ENCODE measurements at regions of chr15 and their contacts with region 1.

Region 1: DNA sequence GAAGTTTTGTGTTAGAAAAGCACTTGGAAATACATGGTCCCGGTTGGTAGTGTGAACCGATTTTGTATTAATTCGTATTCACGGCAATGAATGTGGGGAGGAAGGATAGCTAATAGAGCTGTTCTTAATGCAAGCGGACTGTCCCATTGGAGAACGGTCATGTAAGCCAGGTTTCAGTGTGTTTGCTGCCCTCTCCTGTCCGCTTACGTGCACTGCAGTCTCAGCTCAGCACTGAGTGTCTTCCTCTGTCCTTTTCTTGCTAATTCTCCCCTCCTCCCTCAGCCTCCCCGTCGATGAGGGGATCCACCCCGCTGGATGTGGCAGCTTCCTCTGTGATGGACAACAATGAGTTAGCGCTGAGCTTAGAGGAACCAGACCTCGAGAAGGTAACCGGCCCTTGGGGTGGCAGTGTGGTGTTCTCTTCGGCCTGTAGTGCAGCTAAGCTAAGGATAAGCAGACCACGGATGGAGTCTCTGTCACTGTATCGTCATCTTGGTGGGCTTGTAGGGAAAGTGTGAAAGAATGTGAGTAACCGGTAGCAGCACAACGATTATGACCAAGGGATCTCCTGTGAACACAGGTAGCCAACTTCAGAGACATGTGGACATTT is 267.5 kb upstream of the CHRM5 start:
- DNase-seq: peak; percentile 77
- ATAC-seq: peak; percentile 100
- H3K4me3 ChIP-seq: no peak overlapping the region
- H3K27ac ChIP-seq: no peak overlapping the region
- H3K4me1 ChIP-seq: no peaks in the 10 kb centered on the region
- H3K27me3 ChIP-seq: peaks cover 15% of the 10 kb centered on the region
- CTCF ChIP-seq: peak; percentile 92
- POLR2A ChIP-seq: no peak
- RAD21 ChIP-seq: peak; percentile 86

Region 2: DNA sequence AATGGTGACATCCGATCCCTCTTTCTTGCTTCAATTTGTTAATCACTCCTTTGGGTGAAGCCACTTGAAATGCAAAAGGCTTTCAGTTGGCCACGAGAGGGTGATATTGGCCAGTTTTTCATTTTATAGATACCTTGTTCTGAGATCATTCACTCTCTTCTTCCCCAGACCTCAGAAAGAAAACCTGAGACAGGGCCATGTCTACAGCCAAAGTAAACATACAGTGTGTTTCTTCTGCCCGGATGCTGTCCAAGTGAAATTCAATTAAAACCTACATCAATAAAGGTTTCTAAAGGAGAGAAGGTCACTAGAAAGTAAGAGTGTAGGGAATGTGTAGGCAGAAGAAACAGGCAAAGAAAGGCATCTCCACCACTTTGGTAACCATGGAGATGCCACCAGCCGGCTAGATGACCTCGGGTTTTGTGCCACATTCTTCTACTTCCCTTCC is 466.8 kb before region 1 on chr15:
- CTCF ChIA-PET with region 1: interaction called, 5 read pairs
- POLR2A ChIA-PET with region 1: no interaction called
- dilution Hi-C with region 1: no loop called
- in situ Hi-C with region 1: loop called (anchors 10 kb)
- intact Hi-C with region 1: loop called (anchors 1 kb)
- DNase-seq: peak; percentile 45
- ATAC-seq: peak; percentile 70
- H3K4me3 ChIP-seq: no peak overlapping the region
- H3K27ac ChIP-seq: no peak overlapping the region
- H3K4me1 ChIP-seq: no peaks in the 10 kb centered on the region
- H3K27me3 ChIP-seq: peaks cover 26% of the 10 kb centered on the region
- CTCF ChIP-seq: peak; percentile 54
- POLR2A ChIP-seq: no peak
- RAD21 ChIP-seq: peak; percentile 52

Region 3: GRCh38 chr15:33292717-33293307 is 408.0 kb before region 1 on chr15:
- CTCF ChIA-PET with region 1: interaction called, 29 read pairs
- POLR2A ChIA-PET with region 1: no interaction called
- dilution Hi-C with region 1: no loop called
- in situ Hi-C with region 1: no loop called
- intact Hi-C with region 1: loop called (anchors 1 kb)
- DNase-seq: peak; percentile 53
- ATAC-seq: peak; percentile 82
- H3K4me3 ChIP-seq: no peak overlapping the region
- H3K27ac ChIP-seq: no peak overlapping the region
- H3K4me1 ChIP-seq: no peaks in the 10 kb centered on the region
- H3K27me3 ChIP-seq: peaks cover 20% of the 10 kb centered on the region
- CTCF ChIP-seq: peak; percentile 62
- POLR2A ChIP-seq: no peak
- RAD21 ChIP-seq: peak; percentile 66

Region 4: GRCh38 chr15:33309602-33310276 is 391.1 kb before region 1 on chr15:
- CTCF ChIA-PET with region 1: interaction called, 3 read pairs
- POLR2A ChIA-PET with region 1: no interaction called
- dilution Hi-C with region 1: no loop called
- in situ Hi-C with region 1: loop called (anchors 10 kb)
- intact Hi-C with region 1: no loop called
- DNase-seq: no peak
- ATAC-seq: no peak
- H3K4me3 ChIP-seq: no peak overlapping the region
- H3K27ac ChIP-seq: no peak overlapping the region
- H3K4me1 ChIP-seq: no peaks in the 10 kb centered on the region
- H3K27me3 ChIP-seq: peaks cover 33% of the 10 kb centered on the region
- CTCF ChIP-seq: no peak
- POLR2A ChIP-seq: no peak
- RAD21 ChIP-seq: no peak

Region 5: DNA sequence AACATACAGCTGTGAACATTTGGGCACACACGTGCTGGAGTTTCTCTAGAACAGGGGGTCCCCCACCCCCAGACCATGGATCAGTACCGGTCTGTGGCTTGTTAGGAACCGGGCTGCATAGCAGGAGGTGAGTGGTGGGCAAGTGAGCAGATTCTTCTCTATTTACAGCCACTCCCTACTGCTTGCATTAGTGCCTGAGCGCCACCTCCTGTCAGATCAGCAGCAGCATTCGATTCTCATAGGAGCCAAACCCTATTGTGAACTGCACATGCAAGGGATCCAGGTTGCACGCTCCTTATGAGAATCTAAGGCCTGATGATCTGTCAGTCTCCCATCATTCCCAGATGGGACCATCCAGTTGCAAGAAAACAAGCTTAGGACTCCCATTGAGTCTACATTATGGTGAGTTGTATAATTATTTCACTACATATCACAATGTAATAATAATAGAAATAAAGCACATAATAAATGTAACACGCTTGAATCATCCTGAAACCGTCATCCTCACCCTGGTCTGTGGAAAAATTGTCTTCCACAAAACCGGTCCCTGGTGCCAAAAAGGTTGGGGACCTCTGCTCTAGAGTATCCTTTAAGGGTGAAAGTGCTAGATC is 293.3 kb after region 1 on chr15:
- CTCF ChIA-PET with region 1: no interaction called
- POLR2A ChIA-PET with region 1: no interaction called
- dilution Hi-C with region 1: no loop called
- in situ Hi-C with region 1: no loop called
- intact Hi-C with region 1: loop called (anchors 1 kb)
- DNase-seq: peak; percentile 51
- ATAC-seq: peak; percentile 91
- H3K4me3 ChIP-seq: no peak overlapping the region
- H3K27ac ChIP-seq: no peak overlapping the region
- H3K4me1 ChIP-seq: no peaks in the 10 kb centered on the region
- H3K27me3 ChIP-seq: no peaks in the 10 kb centered on the region
- CTCF ChIP-seq: peak; percentile 60
- POLR2A ChIP-seq: no peak
- RAD21 ChIP-seq: peak; percentile 72

Measured in IMR-90 (cell line).